CD8-positive, alpha-beta T cell (primary cell): ENCODE measurements at regions of chr2 and their contacts with region 1.

Region 1: DNA sequence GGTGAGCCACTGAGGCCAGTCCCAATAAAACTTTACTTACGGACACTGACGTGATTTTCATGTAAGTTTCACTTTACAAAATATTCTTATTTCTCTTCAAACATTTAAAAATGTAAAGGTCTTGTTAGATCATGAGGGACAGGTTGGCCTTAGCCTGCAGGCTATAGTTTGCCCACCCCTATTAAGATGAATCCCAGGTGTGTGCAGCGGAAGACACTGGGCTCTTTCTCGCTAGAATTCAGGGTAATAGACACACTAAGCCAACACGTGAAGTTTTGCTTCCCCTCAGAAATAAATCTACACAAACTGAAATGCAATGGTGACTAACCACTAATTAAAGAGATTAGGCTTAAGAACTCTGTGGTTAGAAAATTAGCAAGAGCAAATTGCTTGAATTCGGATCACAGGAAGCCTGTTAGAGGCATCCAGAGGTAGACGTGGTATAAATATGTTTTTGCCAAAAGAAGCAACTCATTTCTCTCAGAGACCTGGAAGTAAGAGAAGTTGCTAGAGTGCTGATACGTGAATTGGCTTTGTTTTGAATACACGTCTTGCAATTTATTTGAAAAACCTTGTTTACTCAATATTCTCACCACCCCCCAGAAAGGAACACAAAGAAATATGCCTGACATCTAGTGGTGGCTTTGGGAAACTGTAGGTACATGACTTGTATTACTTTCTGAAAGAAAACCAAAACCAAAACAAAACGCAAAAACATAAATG is 151.6 kb downstream of the DTNB start:
- DNase-seq: peak in 7 of 9 experiments; percentile 3 to 88 (median 25)
- ATAC-seq: peak; percentile 100
- H3K4me3 ChIP-seq: no peak overlapping the region
- H3K4me3 Mint-ChIP-seq: peak overlapping the region; percentile 30
- H3K27ac ChIP-seq: peak overlapping the region in 1 of 2 experiments; percentile 51
- H3K27ac Mint-ChIP-seq: peak overlapping the region; percentile 46
- H3K4me1 ChIP-seq: peaks cover 4% of the 10 kb centered on the region
- H3K4me1 Mint-ChIP-seq: peaks cover 7% of the 10 kb centered on the region
- H3K27me3 ChIP-seq: no peaks in the 10 kb centered on the region
- H3K27me3 Mint-ChIP-seq: no peaks in the 10 kb centered on the region
- CTCF ChIP-seq: peak; percentile 78

Region 2: DNA sequence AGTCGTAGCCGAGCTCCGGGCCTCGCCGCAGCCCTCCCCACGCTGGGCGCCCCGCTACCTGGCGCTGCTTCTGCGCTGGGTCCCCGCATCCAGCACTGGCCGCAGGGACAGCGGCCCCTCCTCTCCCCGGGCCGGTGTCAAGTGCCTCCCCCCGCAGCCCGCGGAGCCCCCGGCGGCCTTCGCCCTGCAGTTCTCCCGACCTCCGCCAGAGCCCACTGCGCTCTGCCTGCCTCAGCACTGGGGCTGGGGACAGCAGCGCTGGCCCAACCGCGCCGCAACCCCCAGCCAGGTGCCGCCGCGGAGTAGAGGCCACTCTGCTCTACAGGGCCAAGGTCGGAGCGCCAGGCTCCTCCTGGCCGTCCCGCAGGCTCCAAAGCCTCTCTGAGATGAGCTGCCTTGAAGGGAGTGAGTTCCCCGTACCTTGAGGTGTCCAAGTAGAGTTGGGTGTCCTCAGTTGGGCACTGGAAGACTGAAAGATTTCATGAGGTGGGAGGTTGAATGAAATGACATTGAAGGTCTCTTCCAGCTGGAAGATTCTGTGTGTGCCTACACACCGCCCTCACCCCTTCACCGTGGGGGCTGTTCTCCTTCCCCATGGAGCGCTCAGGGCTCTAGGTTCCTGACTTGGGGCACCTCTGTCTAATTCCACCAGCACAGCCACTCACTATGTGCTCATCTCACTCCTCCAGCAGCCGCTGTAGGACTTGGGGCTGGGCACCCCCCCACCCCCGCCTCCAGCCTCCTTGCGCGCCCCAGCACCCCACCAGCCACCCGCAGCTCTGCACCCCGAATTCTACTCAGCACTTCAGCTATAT is 179.2 kb before region 1 on chr2:
- CTCF ChIA-PET with region 1: no interaction called
- POLR2A ChIA-PET with region 1: no interaction called
- intact Hi-C with region 1: loop called (anchors 1 kb)
- DNase-seq: peak; percentile 62 to 91 (median 80)
- ATAC-seq: peak; percentile 85
- H3K4me3 ChIP-seq: peak overlapping the region; percentile 22 to 53
- H3K4me3 Mint-ChIP-seq: peak overlapping the region; percentile 85
- H3K27ac ChIP-seq: no peak overlapping the region
- H3K27ac Mint-ChIP-seq: peak overlapping the region; percentile 77
- H3K4me1 ChIP-seq: peaks cover 42% of the 10 kb centered on the region
- H3K4me1 Mint-ChIP-seq: peaks cover 33% of the 10 kb centered on the region
- H3K27me3 ChIP-seq: no peaks in the 10 kb centered on the region
- H3K27me3 Mint-ChIP-seq: no peaks in the 10 kb centered on the region
- CTCF ChIP-seq: peak; percentile 87

Region 3: GRCh38 chr2:25539136-25539535 is 17.3 kb after region 1 on chr2:
- CTCF ChIA-PET with region 1: no interaction called
- POLR2A ChIA-PET with region 1: no interaction called
- intact Hi-C with region 1: no loop called
- DNase-seq: no peak
- ATAC-seq: no peak
- H3K4me3 ChIP-seq: no peak overlapping the region
- H3K4me3 Mint-ChIP-seq: no peak overlapping the region
- H3K27ac ChIP-seq: no peak overlapping the region
- H3K27ac Mint-ChIP-seq: no peak overlapping the region
- H3K4me1 ChIP-seq: no peaks in the 10 kb centered on the region
- H3K4me1 Mint-ChIP-seq: no peaks in the 10 kb centered on the region
- H3K27me3 ChIP-seq: no peaks in the 10 kb centered on the region
- H3K27me3 Mint-ChIP-seq: no peaks in the 10 kb centered on the region
- CTCF ChIP-seq: no peak